ENCODE measurements at regions of chrX and their contacts with region 1.

Region 1: GRCh38 chrX:14528629-14529289 is 577 bp upstream of the GLRA2 start:
- DNase-seq: peak; percentile 2
- ATAC-seq: no peak
- H3K4me3 ChIP-seq: no peak overlapping the region
- H3K27ac ChIP-seq: no peak overlapping the region
- H3K4me1 ChIP-seq: no peaks in the 10 kb centered on the region
- H3K27me3 ChIP-seq: no peaks in the 10 kb centered on the region
- CTCF ChIP-seq: peak; percentile 50

Region 2: DNA sequence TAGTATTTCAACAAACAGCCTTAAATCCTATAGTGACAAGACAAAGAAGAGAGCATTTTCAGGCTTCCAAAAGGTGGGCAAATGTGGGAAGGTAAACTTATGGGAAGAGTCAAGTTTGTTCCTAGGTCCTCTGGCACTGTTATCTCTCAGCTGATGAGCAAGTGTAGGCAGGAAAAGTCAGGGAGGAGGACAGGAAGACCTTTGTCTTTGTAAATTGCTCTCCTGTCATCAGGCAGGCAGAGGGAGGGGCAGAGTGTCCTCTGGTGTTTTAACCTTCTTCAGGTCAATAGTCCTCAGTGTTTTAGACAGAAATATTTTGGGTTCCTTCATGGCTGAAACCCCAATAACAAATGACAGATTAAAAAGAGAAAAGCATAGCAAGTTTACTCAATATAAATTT is 485.6 kb before region 1 on chrX:
- CTCF ChIA-PET with region 1: no interaction called
- POLR2A ChIA-PET with region 1: no interaction called
- in situ Hi-C with region 1: no loop called
- intact Hi-C with region 1: loop called (anchors 5 kb)
- DNase-seq: no peak
- ATAC-seq: no peak
- H3K4me3 ChIP-seq: no peak overlapping the region
- H3K27ac ChIP-seq: no peak overlapping the region
- H3K4me1 ChIP-seq: no peaks in the 10 kb centered on the region
- H3K27me3 ChIP-seq: no peaks in the 10 kb centered on the region
- CTCF ChIP-seq: no peak

Region 3: GRCh38 chrX:14362721-14363120 is 166.0 kb before region 1 on chrX:
- CTCF ChIA-PET with region 1: no interaction called
- POLR2A ChIA-PET with region 1: no interaction called
- in situ Hi-C with region 1: no loop called
- intact Hi-C with region 1: no loop called
- DNase-seq: no peak
- ATAC-seq: no peak
- H3K4me3 ChIP-seq: no peak overlapping the region
- H3K27ac ChIP-seq: no peak overlapping the region
- H3K4me1 ChIP-seq: no peaks in the 10 kb centered on the region
- H3K27me3 ChIP-seq: no peaks in the 10 kb centered on the region
- CTCF ChIP-seq: no peak

Region 4: DNA sequence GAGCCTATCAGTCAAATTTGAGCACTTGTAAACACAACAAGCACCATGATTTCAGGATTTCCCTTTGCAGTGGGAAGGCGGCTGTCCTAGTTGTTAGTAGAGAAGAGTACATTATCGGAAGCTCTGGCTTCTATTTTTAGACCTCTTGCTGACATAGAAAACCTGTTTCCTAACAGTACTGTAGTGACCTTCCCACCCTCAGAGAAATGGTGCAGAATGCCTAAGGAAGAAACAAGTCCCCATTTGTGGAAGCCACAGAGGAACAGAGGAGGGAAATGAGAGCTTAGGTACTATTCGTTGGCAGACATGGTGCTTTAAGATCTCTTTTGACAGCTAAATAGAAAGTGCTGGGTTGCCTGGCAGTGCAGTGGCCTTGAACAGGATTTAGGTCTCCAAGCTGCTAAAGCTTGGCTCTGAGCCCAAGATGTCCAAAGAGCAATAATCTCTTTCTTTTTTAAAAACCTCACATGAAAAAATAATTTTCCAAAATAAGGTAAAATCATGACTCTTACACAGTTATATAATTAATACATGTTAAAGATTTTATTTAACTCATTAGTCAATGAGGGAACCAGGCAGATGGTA is 25.5 kb after region 1 on chrX:
- CTCF ChIA-PET with region 1: no interaction called
- POLR2A ChIA-PET with region 1: no interaction called
- in situ Hi-C with region 1: no loop called
- intact Hi-C with region 1: no loop called
- DNase-seq: no peak
- ATAC-seq: no peak
- H3K4me3 ChIP-seq: no peak overlapping the region
- H3K27ac ChIP-seq: no peak overlapping the region
- H3K4me1 ChIP-seq: no peaks in the 10 kb centered on the region
- H3K27me3 ChIP-seq: no peaks in the 10 kb centered on the region
- CTCF ChIP-seq: no peak

Region 5: GRCh38 chrX:14956813-14957582 is 428.2 kb after region 1 on chrX:
- CTCF ChIA-PET with region 1: no interaction called
- POLR2A ChIA-PET with region 1: no interaction called
- in situ Hi-C with region 1: no loop called
- intact Hi-C with region 1: no loop called
- DNase-seq: no peak
- ATAC-seq: no peak
- H3K4me3 ChIP-seq: no peak overlapping the region
- H3K27ac ChIP-seq: no peak overlapping the region
- H3K4me1 ChIP-seq: no peaks in the 10 kb centered on the region
- H3K27me3 ChIP-seq: no peaks in the 10 kb centered on the region
- CTCF ChIP-seq: no peak

Region 6: GRCh38 chrX:15721911-15722310 is 1193.2 kb after region 1 on chrX:
- CTCF ChIA-PET with region 1: no interaction called
- POLR2A ChIA-PET with region 1: no interaction called
- in situ Hi-C with region 1: no loop called
- intact Hi-C with region 1: no loop called
- DNase-seq: no peak
- ATAC-seq: no peak
- H3K4me3 ChIP-seq: no peak overlapping the region
- H3K27ac ChIP-seq: no peak overlapping the region
- H3K4me1 ChIP-seq: no peaks in the 10 kb centered on the region
- H3K27me3 ChIP-seq: no peaks in the 10 kb centered on the region
- CTCF ChIP-seq: no peak